ENCODE measurements at regions of chr20 and their contacts with region 1.

Region 1: GRCh38 chr20:23920417-23921325 is 41.1 kb upstream of the CST5 start:
- DNase-seq: no peak
- H3K4me3 ChIP-seq: no peak overlapping the region
- H3K27ac ChIP-seq: peak overlapping the region; percentile 47
- H3K4me1 ChIP-seq: peaks cover 31% of the 10 kb centered on the region
- H3K27me3 ChIP-seq: no peaks in the 10 kb centered on the region
- CTCF ChIP-seq: no peak

Region 2: DNA sequence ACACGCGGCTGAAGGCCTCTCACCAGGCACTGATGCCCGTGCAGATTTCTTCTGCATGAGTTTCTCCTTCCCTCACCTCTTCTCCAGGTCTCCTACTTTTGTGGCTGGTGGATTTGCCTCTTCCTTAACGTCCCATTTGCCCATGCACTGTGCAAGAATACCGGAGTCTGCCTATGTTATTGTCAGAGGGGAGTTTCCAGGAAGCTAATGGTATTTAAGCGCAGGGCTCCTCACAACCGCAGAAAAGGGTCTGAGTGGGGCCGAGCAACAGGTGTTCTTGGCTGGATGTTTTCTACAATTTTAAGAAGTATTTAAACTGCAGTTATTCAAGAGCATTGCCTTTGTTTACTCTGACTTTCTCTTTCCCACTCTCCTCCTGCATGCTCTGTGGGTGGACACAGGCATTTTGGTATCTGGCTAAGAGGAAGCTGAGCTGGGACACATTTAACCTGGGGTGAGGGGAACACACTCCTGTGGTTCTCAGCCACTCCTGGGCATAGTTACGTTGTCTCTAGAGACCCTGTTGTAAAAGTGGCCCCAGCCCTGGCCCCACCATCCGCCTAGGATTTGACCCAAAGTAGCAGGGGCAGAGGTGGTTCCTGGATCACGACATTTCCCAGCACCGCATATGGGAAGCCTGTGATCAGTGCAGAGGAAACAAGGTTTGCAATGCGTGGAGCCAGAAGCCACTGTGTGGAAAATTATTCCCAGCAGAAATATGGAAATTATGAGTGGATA is 33.5 kb after region 1 on chr20:
- CTCF ChIA-PET with region 1: no interaction called
- POLR2A ChIA-PET with region 1: no interaction called
- intact Hi-C with region 1: no loop called
- DNase-seq: no peak
- H3K4me3 ChIP-seq: no peak overlapping the region
- H3K27ac ChIP-seq: no peak overlapping the region
- H3K4me1 ChIP-seq: no peaks in the 10 kb centered on the region
- H3K27me3 ChIP-seq: no peaks in the 10 kb centered on the region
- CTCF ChIP-seq: no peak

Region 3: DNA sequence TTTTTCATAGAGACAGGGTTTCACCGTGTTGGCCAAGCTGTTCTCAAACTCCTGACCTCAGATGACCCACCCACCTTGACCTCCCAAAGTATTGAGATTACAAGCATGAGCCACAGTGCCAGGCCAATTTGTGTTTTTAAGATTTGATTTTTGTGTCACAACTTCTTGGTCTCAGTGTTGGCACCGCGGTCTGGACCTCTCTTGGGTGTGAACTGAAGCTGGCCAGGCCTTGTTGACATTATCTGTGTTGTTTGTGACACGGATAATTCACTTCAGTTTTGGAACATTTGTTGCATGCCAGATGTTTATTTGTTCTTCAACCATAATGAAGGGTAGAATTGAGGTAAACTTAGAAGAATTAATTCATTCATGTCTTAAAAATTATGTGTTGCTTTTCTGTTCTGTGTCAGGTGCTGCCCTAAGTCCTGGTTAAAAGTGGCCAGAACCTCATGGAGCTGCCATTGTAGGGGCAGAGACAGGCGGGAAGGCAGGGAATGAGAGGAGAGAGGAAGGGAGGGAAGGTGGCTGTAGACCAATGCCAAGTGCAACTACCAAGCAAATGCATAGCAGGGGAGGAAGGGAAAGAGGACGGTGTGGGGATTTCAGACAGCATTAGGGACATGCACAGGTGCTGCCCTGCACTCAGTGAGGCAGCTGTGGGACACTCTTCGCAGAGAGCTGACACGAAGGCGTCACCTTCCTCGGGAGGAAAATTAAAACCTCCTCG is 46.7 kb after region 1 on chr20:
- CTCF ChIA-PET with region 1: no interaction called
- POLR2A ChIA-PET with region 1: no interaction called
- intact Hi-C with region 1: no loop called
- DNase-seq: no peak
- H3K4me3 ChIP-seq: no peak overlapping the region
- H3K27ac ChIP-seq: no peak overlapping the region
- H3K4me1 ChIP-seq: no peaks in the 10 kb centered on the region
- H3K27me3 ChIP-seq: no peaks in the 10 kb centered on the region
- CTCF ChIP-seq: no peak

Region 4: DNA sequence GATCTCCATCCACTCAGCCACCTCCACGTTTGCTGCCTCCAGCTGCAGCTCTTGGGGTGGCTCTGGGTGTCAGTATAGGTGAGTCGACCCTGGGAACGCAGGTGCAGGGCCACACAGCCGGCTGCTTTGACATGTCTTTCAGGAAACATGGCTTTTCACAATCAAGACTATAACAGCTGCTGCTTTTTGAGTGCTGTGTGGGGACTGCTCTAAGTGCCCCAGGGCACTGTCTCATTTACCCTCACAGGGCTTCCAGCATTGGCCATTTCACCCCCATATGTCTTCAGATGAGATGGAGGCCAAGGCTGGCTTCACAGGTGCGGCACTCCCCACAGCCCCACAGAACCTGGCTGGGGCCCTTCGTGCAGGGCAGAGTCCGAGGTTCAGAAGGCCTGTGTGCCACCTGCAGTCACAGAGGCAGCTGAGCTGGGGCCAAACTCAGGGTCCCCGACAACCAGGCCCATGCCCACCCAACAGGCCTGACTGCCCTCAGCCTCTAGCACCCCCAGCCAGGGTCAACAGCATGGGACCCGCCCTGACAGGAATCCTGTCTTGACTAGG is 1013.5 kb after region 1 on chr20:
- CTCF ChIA-PET with region 1: no interaction called
- POLR2A ChIA-PET with region 1: no interaction called
- intact Hi-C with region 1: loop called (anchors 5 kb)
- DNase-seq: no peak
- H3K4me3 ChIP-seq: no peak overlapping the region
- H3K27ac ChIP-seq: no peak overlapping the region
- H3K4me1 ChIP-seq: peaks cover 27% of the 10 kb centered on the region
- H3K27me3 ChIP-seq: no peaks in the 10 kb centered on the region
- CTCF ChIP-seq: no peak

Measured in PC-9 (cell line).